ENCODE measurements at regions of chr7 and their contacts with region 1.

Region 1: GRCh38 chr7:69790977-69791724 is 192.9 kb downstream of the AUTS2 start:
- DNase-seq: no peak
- ATAC-seq: no peak
- H3K4me3 ChIP-seq: no peak overlapping the region
- H3K27ac ChIP-seq: no peak overlapping the region
- H3K4me1 ChIP-seq: no peaks in the 10 kb centered on the region
- H3K27me3 ChIP-seq: no peaks in the 10 kb centered on the region
- CTCF ChIP-seq: no peak
- POLR2A ChIP-seq: no peak
- RAD21 ChIP-seq: no peak

Region 2: DNA sequence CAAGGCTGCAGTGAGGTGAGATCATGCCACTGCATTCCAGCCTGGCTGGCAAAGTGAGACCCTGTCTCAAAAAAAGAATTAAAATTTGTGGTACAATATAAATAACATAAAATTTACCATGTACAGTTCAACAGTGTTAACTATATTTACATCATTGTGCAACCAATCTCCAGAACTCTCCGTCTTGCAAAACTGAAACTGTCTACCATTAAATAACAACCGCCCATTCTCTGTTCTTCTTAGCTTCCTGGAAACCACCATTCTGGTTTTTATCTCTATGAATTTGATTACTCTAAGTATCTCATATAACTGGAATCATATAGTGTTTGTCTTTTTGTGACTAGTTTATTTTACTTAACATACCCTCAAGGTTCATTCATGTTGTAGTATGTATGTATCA is 25.3 kb before region 1 on chr7:
- CTCF ChIA-PET with region 1: no interaction called
- POLR2A ChIA-PET with region 1: no interaction called
- dilution Hi-C with region 1: no loop called
- in situ Hi-C with region 1: no loop called
- intact Hi-C with region 1: loop called (anchors 1 kb)
- DNase-seq: no peak
- ATAC-seq: no peak
- H3K4me3 ChIP-seq: no peak overlapping the region
- H3K27ac ChIP-seq: no peak overlapping the region
- H3K4me1 ChIP-seq: no peaks in the 10 kb centered on the region
- H3K27me3 ChIP-seq: no peaks in the 10 kb centered on the region
- CTCF ChIP-seq: no peak
- POLR2A ChIP-seq: no peak
- RAD21 ChIP-seq: no peak

Measured in IMR-90 (cell line).